Activated CD8-positive, alpha-beta T cell treated with anti-CD3 and anti-CD28 coated beads for 36 hours (primary cell): ENCODE measurements at regions of chr4 and their contacts with region 1.

Region 1: GRCh38 chr4:7750523-7750922 is 189.1 kb downstream of the AFAP1 start:
- DNase-seq: no peak
- ATAC-seq: no peak
- H3K4me3 Mint-ChIP-seq: no peak overlapping the region
- H3K27ac Mint-ChIP-seq: no peak overlapping the region
- H3K4me1 Mint-ChIP-seq: peaks cover 25% of the 10 kb centered on the region
- H3K27me3 Mint-ChIP-seq: no peaks in the 10 kb centered on the region
- CTCF ChIP-seq: no peak

Region 2: GRCh38 chr4:6855692-6856297 is 894.7 kb before region 1 on chr4:
- CTCF ChIA-PET with region 1: no interaction called
- POLR2A ChIA-PET with region 1: no interaction called
- intact Hi-C with region 1: no loop called
- DNase-seq: peak; percentile 64
- ATAC-seq: peak; percentile 97
- H3K4me3 Mint-ChIP-seq: peak overlapping the region; percentile 25
- H3K27ac Mint-ChIP-seq: peak overlapping the region; percentile 92
- H3K4me1 Mint-ChIP-seq: peaks cover 29% of the 10 kb centered on the region
- H3K27me3 Mint-ChIP-seq: no peaks in the 10 kb centered on the region
- CTCF ChIP-seq: no peak

Region 3: GRCh38 chr4:7761720-7762119 is 11.2 kb after region 1 on chr4:
- CTCF ChIA-PET with region 1: interaction called, 15 read pairs
- POLR2A ChIA-PET with region 1: interaction called, 10 read pairs
- intact Hi-C with region 1: no loop called
- DNase-seq: peak; percentile 71
- ATAC-seq: peak; percentile 63
- H3K4me3 Mint-ChIP-seq: no peak overlapping the region
- H3K27ac Mint-ChIP-seq: peak overlapping the region; percentile 71
- H3K4me1 Mint-ChIP-seq: peaks cover 39% of the 10 kb centered on the region
- H3K27me3 Mint-ChIP-seq: no peaks in the 10 kb centered on the region
- CTCF ChIP-seq: peak; percentile 75